ENCODE measurements at regions of chrX and their contacts with region 1.

Region 1: DNA sequence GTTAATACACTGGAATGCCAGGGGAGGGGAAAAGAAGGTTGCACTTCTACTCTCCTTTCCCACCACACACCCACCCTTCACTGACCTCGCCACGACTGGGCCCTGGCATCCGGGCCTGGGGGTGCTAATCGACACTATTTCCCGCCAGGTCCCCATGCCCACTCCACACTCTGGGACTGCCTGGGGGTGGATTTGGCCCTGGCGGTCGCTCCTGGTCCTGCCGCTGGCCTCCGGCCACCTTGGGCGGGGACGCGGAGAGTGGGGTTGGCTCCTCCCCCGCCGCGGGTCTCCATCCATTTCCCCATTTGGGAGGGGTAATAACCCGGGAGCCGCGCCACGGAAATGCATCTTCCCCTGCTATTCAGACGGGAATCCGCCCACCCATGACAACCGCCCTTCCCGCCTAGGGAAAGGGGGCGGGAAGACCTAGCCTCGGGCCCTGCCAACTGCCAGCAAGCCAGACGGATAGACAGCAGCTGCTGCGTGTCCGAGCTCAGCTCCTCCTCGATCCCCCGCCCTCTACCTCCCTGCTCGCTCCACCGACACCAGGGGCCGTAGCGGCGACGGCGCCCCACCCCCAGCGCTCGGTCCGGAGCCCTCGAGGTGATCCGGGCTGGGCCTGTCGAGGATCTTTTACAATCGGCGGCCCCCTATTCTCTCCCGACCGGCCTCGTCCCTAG is 78.1 kb downstream of the RLIM start:
- H3K4me3 ChIP-seq: peak overlapping the region; percentile 33
- H3K27ac ChIP-seq: peak overlapping the region; percentile 90
- H3K4me1 ChIP-seq: peaks cover 7% of the 10 kb centered on the region; the same call in 1 of the 2 replicates
- CTCF ChIP-seq: peak; percentile 51

Region 2: DNA sequence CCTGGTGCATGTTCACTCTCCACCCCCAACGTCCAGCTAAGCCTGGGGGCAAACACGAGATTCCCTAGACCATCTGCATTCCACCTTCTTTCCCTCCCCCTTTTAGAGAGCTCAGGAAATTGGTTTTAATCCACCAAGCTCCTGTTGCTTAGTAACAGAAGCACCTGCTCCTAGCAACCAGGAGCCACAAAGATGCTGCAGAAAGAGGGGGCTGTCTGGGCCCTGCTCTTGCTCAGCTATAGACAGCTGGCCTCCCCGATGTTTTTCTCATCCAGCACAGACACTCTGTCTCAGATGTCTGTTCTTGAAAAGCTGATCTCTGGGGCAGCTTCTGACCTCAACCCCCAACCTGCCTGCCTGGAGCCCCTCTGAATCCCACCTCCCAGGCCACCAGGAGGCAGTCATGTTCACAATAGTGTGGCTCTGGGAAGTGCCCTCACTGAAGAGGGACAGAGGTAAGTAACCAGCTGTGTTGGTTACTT is 43.5 kb before region 1 on chrX:
- CTCF ChIA-PET with region 1: interaction called, 12 read pairs
- POLR2A ChIA-PET with region 1: no interaction called
- H3K4me3 ChIP-seq: no peak overlapping the region
- H3K27ac ChIP-seq: no peak overlapping the region
- H3K4me1 ChIP-seq: peaks cover 3% of the 10 kb centered on the region; the same call in 1 of the 2 replicates
- CTCF ChIP-seq: no peak

Region 3: GRCh38 chrX:74521961-74522751 is 14.1 kb before region 1 on chrX:
- CTCF ChIA-PET with region 1: interaction called, 18 read pairs
- POLR2A ChIA-PET with region 1: no interaction called
- H3K4me3 ChIP-seq: no peak overlapping the region
- H3K27ac ChIP-seq: no peak overlapping the region
- H3K4me1 ChIP-seq: no peaks in the 10 kb centered on the region
- CTCF ChIP-seq: no peak

Measured in HEK293 (cell line).